BJ (cell line): ENCODE measurements at regions of chr1 and their contacts with region 1.

Region 1: GRCh38 chr1:201436393-201436792 is 14.9 kb upstream of the TNNI1 start:
- DNase-seq: no peak
- H3K4me3 ChIP-seq: no peak overlapping the region
- H3K27me3 ChIP-seq: no peaks in the 10 kb centered on the region
- CTCF ChIP-seq: peak; percentile 55

Region 2: DNA sequence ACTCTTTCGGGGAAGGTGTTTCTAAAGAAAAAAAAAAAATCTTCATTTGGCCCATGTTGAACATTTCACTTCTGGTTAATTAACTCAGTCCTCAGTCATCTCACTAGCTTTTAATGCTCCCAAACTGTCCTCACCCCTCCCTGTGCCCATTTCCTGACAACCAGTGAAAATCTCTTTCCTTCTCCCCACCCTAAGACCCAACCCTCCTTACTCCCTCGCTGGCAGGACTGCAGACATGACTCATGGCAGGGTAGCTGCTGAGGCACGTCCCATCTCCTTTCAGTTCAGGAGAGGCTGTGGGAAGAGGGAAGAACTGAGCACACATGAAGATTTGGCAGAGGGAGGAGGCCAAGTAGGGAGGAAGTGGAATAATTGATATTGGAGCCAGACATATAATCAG is 140.5 kb before region 1 on chr1:
- CTCF ChIA-PET with region 1: no interaction called
- POLR2A ChIA-PET with region 1: no interaction called
- DNase-seq: peak; percentile 27
- H3K4me3 ChIP-seq: no peak overlapping the region
- H3K27me3 ChIP-seq: peaks cover 2% of the 10 kb centered on the region
- CTCF ChIP-seq: no peak

Region 3: DNA sequence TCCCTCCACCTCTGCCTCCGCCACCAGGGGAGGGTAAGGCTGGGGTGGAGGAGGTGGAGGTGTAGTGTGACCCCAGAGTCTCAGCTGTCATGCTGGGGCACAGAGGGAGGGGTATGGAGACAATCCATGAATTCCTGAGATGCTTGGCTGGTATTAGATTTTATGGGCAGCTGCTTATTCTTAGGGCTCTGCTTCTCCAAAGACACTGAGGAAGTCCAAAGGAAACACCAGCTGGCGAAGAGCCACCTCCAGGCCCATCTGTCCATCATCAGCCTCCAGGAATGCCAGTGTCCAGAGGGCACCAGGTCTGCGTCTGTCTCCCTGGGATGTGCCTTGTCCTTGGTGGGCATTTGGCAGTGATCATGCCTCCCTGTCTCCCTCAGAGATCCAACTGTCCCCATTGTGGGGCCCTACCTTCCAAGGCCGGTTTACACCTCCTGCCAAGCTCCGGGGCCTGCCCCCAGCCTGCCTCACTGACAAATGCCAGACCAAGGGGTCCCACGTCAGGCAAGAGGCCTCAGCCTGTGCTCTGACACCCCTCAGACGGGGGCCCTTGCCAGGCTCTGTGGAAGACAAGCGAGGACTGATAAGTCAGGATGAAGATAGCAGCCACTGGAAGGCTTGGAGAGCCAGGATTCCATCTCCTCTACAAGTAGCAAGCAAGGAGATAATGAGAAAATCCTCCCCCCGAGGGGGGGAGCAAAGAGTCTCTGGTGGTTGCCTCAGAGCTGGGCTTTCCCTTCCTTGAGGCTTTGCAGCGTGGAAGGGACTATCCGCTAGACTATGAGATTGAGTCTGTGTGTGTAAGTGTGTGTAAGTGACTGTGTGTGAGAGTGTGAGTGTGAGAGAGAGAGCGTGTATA is 16.4 kb before region 1 on chr1:
- CTCF ChIA-PET with region 1: interaction called, 17 read pairs
- POLR2A ChIA-PET with region 1: no interaction called
- DNase-seq: no peak
- H3K4me3 ChIP-seq: no peak overlapping the region
- H3K27me3 ChIP-seq: peaks cover 23% of the 10 kb centered on the region
- CTCF ChIP-seq: no peak

Region 4: GRCh38 chr1:201456499-201457309 is 20.3 kb after region 1 on chr1:
- CTCF ChIA-PET with region 1: interaction called, 83 read pairs
- POLR2A ChIA-PET with region 1: no interaction called
- DNase-seq: peak; percentile 93
- H3K4me3 ChIP-seq: no peak overlapping the region
- H3K27me3 ChIP-seq: no peaks in the 10 kb centered on the region
- CTCF ChIP-seq: no peak

Region 5: DNA sequence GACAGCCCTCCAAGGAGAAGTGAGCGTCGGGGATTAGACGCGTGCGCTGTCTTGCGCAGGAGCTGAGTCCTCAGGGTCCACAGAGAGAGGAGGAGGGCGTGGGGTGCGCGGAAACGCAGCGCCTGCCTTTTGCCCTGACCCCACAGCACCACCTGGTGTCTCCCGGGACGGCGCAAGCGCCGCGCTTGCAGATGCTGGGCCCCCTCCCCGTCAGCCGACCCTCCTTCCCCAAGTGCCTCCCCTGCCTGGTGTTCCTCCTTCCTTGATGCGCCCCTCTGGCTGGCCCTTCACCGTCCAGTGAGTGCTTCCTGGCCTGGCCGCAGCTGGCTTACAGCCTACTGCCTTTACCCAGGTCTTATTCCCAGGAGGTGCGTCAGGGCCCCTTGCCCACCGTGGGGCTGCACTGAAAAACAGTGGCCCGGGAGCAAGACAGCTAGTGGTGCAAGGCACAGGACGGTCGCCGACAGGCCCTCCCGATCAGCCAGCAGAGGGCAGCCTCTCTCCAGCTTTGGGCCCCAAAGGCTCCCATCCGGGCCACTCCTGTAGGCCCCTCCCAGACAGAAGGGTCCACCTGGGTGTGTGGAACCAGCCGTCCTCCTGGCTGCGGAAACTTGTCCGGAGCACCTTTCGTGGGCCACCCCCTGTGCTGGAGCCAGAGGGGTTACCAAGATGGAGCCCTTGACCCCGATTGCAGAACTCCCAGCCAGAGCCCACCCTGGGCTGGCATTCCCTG is 45.5 kb after region 1 on chr1:
- CTCF ChIA-PET with region 1: interaction called, 53 read pairs
- POLR2A ChIA-PET with region 1: no interaction called
- DNase-seq: no peak
- H3K4me3 ChIP-seq: no peak overlapping the region
- H3K27me3 ChIP-seq: no peaks in the 10 kb centered on the region
- CTCF ChIP-seq: peak; percentile 93

Region 6: GRCh38 chr1:201506556-201507359 is 70.4 kb after region 1 on chr1 and contains the start of gene CSRP1:
- CTCF ChIA-PET with region 1: interaction called, 129 read pairs
- POLR2A ChIA-PET with region 1: no interaction called
- DNase-seq: no peak
- H3K4me3 ChIP-seq: peak within 1 kb of the TSS; percentile 69
- H3K27me3 ChIP-seq: no peaks in the 10 kb centered on the region
- CTCF ChIP-seq: no peak
- polyA plus RNA-seq, gene CSRP1: 720 and 957 TPM in 2 replicates